ENCODE measurements at regions of chr10 and their contacts with region 1.

Region 1: GRCh38 chr10:36050763-36051499 is 408.8 kb upstream of the FZD8 start:
- DNase-seq: no peak
- ATAC-seq: no peak
- H3K4me3 ChIP-seq: no peak overlapping the region
- H3K27ac ChIP-seq: no peak overlapping the region
- H3K4me1 ChIP-seq: no peaks in the 10 kb centered on the region
- H3K27me3 ChIP-seq: no peaks in the 10 kb centered on the region
- CTCF ChIP-seq: no peak

Region 2: DNA sequence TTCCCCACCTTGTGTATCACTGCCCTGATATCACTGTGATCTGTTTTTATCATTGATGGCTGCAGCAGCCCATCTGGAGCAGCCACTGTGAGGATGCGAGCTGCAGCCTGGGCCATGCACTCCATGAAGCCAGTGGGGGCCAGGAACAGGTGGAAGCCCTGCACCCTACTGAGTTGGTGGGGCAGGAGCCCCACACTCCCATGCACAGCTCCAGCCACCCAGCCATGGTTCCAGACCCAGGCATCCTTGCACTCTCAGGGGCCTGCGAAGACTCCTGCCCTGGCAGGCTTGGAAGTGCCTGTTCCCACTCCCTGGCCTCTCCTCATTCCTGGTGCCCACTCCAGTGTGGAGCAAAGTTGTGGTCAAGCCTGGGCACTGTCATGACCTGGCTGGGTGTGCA is 15.2 kb after region 1 on chr10:
- CTCF ChIA-PET with region 1: no interaction called
- POLR2A ChIA-PET with region 1: no interaction called
- in situ Hi-C with region 1: no loop called
- intact Hi-C with region 1: no loop called
- DNase-seq: no peak
- ATAC-seq: no peak
- H3K4me3 ChIP-seq: no peak overlapping the region
- H3K27ac ChIP-seq: no peak overlapping the region
- H3K4me1 ChIP-seq: no peaks in the 10 kb centered on the region
- H3K27me3 ChIP-seq: no peaks in the 10 kb centered on the region
- CTCF ChIP-seq: no peak

Region 3: GRCh38 chr10:36115364-36115763 is 64.4 kb after region 1 on chr10:
- CTCF ChIA-PET with region 1: no interaction called
- POLR2A ChIA-PET with region 1: interaction called, 15 read pairs
- in situ Hi-C with region 1: no loop called
- intact Hi-C with region 1: no loop called
- DNase-seq: no peak
- ATAC-seq: no peak
- H3K4me3 ChIP-seq: no peak overlapping the region
- H3K27ac ChIP-seq: no peak overlapping the region
- H3K4me1 ChIP-seq: no peaks in the 10 kb centered on the region
- H3K27me3 ChIP-seq: no peaks in the 10 kb centered on the region
- CTCF ChIP-seq: no peak